Calu3 (cell line): ENCODE measurements at regions of chr10 and their contacts with region 1.

Region 1: DNA sequence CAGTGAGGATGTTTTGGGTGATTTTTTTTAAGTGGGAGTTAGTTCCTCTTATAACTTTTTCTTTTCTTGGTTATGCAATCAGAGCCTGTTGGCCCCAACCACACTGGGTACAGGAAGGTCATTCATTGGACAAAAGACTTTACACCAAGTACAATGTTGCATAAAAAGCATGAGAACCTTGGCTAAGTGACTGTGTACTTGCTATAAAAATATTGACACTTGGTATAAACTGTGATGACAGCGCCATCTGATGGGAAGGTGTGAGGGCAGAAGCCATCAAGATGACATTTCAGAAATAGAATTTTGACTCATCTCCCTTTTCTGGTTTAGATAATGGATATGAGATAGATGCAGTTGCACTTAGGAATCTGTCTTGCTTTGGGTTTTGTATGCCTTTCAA is 126.4 kb upstream of the CCDC6 start:
- DNase-seq: peak; percentile 78
- H3K4me3 Mint-ChIP-seq: no peak overlapping the region
- H3K27ac Mint-ChIP-seq: no peak overlapping the region
- H3K4me1 Mint-ChIP-seq: peaks cover 11% of the 10 kb centered on the region
- H3K27me3 Mint-ChIP-seq: no peaks in the 10 kb centered on the region
- CTCF ChIP-seq: peak; percentile 56

Region 2: GRCh38 chr10:59625721-59626522 is 406.8 kb before region 1 on chr10:
- CTCF ChIA-PET with region 1: interaction called, 3 read pairs
- intact Hi-C with region 1: loop called (anchors 1 kb)
- DNase-seq: peak; percentile 54
- H3K4me3 Mint-ChIP-seq: no peak overlapping the region
- H3K27ac Mint-ChIP-seq: no peak overlapping the region
- H3K4me1 Mint-ChIP-seq: peaks cover 7% of the 10 kb centered on the region
- H3K27me3 Mint-ChIP-seq: peaks cover 53% of the 10 kb centered on the region
- CTCF ChIP-seq: peak; percentile 86

Region 3: DNA sequence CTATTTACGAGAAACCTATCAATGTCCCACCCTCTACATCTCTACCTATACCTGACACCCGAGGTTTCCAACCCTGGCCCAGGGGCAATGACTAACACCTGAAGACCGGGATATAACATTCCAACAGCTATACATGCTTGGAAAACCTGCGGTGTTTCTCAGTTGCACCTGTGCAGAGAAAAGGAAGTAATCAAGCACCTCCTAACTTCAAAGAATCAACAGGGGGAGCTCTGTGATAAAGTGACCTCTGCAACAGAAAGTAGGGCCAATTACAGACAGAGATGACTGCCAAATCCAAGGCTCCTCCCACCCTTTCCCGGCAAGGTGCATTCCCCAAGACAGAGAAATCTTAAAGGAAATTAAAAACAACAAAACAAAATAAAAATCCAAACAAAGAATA is 167.6 kb before region 1 on chr10:
- CTCF ChIA-PET with region 1: interaction called, 7 read pairs
- intact Hi-C with region 1: loop called (anchors 1 kb)
- DNase-seq: peak; percentile 71
- H3K4me3 Mint-ChIP-seq: peak overlapping the region; percentile 33
- H3K27ac Mint-ChIP-seq: peak overlapping the region; percentile 21
- H3K4me1 Mint-ChIP-seq: peaks cover 63% of the 10 kb centered on the region
- H3K27me3 Mint-ChIP-seq: no peaks in the 10 kb centered on the region
- CTCF ChIP-seq: peak; percentile 72

Region 4: DNA sequence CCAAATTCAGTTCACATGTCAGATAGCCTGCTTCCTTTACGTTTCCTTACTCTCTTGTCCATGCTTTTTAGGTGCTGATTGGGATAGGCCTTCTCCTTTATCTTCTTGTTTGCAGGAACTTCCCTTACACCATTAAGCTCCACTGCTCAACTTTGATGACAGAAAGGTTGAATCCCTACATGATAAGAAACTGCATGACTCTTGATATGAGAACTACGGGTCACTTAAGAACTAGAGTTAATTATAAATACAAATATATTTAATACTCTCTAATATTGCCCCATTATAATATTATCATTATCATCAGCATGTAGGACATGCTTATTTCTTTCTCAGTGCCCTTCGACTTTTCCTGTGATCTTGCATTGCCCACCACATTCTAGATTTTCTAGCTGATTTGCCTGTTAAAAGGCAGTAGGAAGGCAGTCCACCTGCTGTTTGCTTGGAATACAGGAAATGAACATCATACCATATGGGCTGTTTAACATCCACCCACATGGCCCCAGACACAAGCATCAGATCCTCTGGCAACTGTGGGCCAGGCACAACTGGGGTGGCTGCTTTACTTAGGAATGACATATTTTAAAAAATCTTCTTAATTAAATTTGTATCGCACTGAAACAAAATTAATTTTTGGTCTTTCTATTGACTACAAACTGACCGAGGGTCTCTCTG is 66.6 kb before region 1 on chr10:
- CTCF ChIA-PET with region 1: no interaction called
- intact Hi-C with region 1: loop called (anchors 2 kb)
- DNase-seq: no peak
- H3K4me3 Mint-ChIP-seq: peak overlapping the region; percentile 8
- H3K27ac Mint-ChIP-seq: peak overlapping the region; percentile 80
- H3K4me1 Mint-ChIP-seq: peaks cover 66% of the 10 kb centered on the region
- H3K27me3 Mint-ChIP-seq: no peaks in the 10 kb centered on the region
- CTCF ChIP-seq: no peak

Region 5: GRCh38 chr10:60521974-60522405 is 489.3 kb after region 1 on chr10:
- CTCF ChIA-PET with region 1: no interaction called
- intact Hi-C with region 1: no loop called
- DNase-seq: peak; percentile 16
- H3K4me3 Mint-ChIP-seq: no peak overlapping the region
- H3K27ac Mint-ChIP-seq: no peak overlapping the region
- H3K4me1 Mint-ChIP-seq: peaks cover 8% of the 10 kb centered on the region
- H3K27me3 Mint-ChIP-seq: no peaks in the 10 kb centered on the region
- CTCF ChIP-seq: no peak